Endothelial cell of umbilical vein (primary cell): ENCODE measurements at regions of chr11 and their contacts with region 1.

Region 1: GRCh38 chr11:27158722-27159679 is 118.4 kb downstream of the BBOX1 start:
- DNase-seq: peak; percentile 70
- H3K4me3 ChIP-seq: no peak overlapping the region
- H3K27ac ChIP-seq: no peak overlapping the region
- H3K4me1 ChIP-seq: no peaks in the 10 kb centered on the region
- H3K27me3 ChIP-seq: no peaks in the 10 kb centered on the region
- CTCF ChIP-seq: peak; percentile 54 to 70
- POLR2A ChIP-seq: no peak

Region 2: DNA sequence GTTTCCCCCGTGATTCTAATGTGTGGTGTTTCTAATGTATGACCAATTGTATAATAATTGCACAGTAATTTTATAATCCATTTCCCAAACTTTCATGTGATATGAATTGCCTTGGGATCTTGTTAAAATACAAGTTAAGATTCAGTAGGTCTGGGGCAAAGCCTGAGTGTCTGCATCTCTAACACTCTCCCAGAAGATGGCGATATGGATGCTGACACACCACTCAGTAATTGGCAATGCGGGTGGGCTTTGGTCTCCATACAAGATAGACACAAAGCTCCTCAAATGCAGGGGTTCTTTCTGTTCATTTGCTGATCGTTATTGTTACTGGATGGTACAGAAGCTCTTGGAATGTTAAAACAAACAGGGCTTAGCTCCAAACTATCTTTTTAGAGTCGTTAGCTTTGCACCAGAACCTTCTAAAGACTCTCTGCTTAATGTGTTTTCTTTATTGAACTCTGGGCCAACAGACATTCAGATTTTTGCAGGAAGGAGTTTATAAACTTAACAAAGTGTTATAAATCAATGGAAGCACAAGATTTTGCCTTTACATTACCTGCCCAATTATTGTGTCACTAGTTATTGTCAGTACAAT is 872.4 kb before region 1 on chr11:
- CTCF ChIA-PET with region 1: interaction called, 50 read pairs
- POLR2A ChIA-PET with region 1: no interaction called
- dilution Hi-C with region 1: no loop called
- intact Hi-C with region 1: loop called (anchors 1 kb)
- DNase-seq: peak; percentile 37
- H3K4me3 ChIP-seq: no peak overlapping the region
- H3K27ac ChIP-seq: no peak overlapping the region
- H3K4me1 ChIP-seq: peaks cover 7% of the 10 kb centered on the region
- H3K27me3 ChIP-seq: no peaks in the 10 kb centered on the region
- CTCF ChIP-seq: peak; percentile 21 to 59
- POLR2A ChIP-seq: no peak

Region 3: GRCh38 chr11:26297189-26297975 is 861.6 kb before region 1 on chr11:
- CTCF ChIA-PET with region 1: interaction called, 36 read pairs
- POLR2A ChIA-PET with region 1: no interaction called
- dilution Hi-C with region 1: no loop called
- intact Hi-C with region 1: loop called (anchors 1 kb)
- DNase-seq: peak; percentile 52
- H3K4me3 ChIP-seq: no peak overlapping the region
- H3K27ac ChIP-seq: no peak overlapping the region
- H3K4me1 ChIP-seq: no peaks in the 10 kb centered on the region
- H3K27me3 ChIP-seq: peaks cover 2 to 5% of the 10 kb centered on the region in 2 experiments
- CTCF ChIP-seq: peak; percentile 49 to 57
- POLR2A ChIP-seq: no peak

Region 4: DNA sequence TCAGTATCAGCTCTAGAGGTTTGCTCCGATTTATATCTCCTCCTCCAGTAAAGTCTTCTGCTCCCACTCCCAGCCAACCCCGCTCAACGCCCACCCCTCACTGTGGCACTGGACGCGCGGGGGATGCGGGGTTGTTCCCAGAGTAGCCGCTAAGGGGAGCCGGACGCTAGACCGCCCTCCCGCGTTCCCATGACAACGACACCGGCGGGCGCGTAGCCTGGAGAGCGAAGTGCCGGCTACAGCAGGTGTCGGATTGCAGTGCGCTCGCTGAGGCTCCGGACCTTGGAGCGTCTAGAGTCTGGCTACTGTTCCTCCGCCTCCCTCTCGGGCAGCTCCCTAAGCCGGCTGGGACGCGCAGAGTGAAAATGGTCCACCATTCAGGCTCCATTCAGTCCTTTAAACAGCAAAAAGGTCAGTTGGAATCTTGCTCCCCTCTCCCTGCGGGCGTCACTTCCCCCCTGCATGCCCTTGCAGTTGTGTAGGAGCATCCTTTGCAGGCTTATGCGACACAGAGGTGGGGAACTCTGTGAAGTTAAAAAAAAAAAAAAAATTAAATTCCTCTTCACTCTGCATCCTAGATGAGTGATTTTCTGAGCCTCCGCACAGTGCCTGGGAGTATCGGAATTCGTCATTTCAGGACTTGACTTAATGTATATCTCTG is 827.0 kb before region 1 on chr11 and contains the start of gene ANO3:
- CTCF ChIA-PET with region 1: no interaction called
- POLR2A ChIA-PET with region 1: no interaction called
- dilution Hi-C with region 1: no loop called
- intact Hi-C with region 1: loop called (anchors 1 kb)
- DNase-seq: peak; percentile 65
- H3K4me3 ChIP-seq: no peak within 1 kb of the TSS
- H3K27ac ChIP-seq: no peak within 1 kb of the TSS
- H3K4me1 ChIP-seq: no peaks in the 10 kb centered on the region
- H3K27me3 ChIP-seq: peaks cover 6 to 16% of the 10 kb centered on the region in 2 experiments
- CTCF ChIP-seq: peak; percentile 43 to 79
- POLR2A ChIP-seq: no peak
- total RNA-seq, gene ANO3: not detected in 2 replicates

Region 5: DNA sequence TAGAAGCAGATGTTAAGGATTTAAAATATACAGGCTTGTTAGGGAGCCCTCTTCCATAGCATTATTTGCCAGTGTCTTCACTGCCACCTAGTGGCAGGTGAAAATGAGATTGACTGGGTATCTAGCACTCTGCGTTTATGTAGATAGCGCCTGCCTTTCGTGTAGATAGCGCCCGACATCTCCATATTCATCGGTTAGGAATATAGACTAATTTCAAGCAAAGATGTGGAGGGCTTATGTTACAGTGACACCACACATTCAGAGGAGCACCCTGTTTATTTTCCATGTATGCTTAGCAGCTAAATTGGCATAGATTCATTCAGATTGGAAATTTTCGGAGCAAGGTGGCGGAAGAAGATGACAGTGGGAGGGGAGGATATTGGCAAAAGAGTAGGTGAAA is 509.1 kb before region 1 on chr11:
- CTCF ChIA-PET with region 1: no interaction called
- POLR2A ChIA-PET with region 1: no interaction called
- dilution Hi-C with region 1: no loop called
- intact Hi-C with region 1: loop called (anchors 10 kb)
- DNase-seq: peak; percentile 63
- H3K4me3 ChIP-seq: no peak overlapping the region
- H3K27ac ChIP-seq: no peak overlapping the region
- H3K4me1 ChIP-seq: no peaks in the 10 kb centered on the region
- H3K27me3 ChIP-seq: no peaks in the 10 kb centered on the region
- CTCF ChIP-seq: peak; percentile 49 to 61
- POLR2A ChIP-seq: no peak

Region 6: GRCh38 chr11:26753723-26754504 is 405.1 kb before region 1 on chr11:
- CTCF ChIA-PET with region 1: interaction called, 33 read pairs
- POLR2A ChIA-PET with region 1: no interaction called
- dilution Hi-C with region 1: no loop called
- intact Hi-C with region 1: loop called (anchors 1 kb)
- DNase-seq: peak; percentile 35
- H3K4me3 ChIP-seq: no peak overlapping the region
- H3K27ac ChIP-seq: no peak overlapping the region
- H3K4me1 ChIP-seq: no peaks in the 10 kb centered on the region
- H3K27me3 ChIP-seq: no peaks in the 10 kb centered on the region
- CTCF ChIP-seq: peak; percentile 30 to 44
- POLR2A ChIP-seq: no peak

Region 7: GRCh38 chr11:27353593-27354358 is 194.8 kb after region 1 on chr11:
- CTCF ChIA-PET with region 1: no interaction called
- POLR2A ChIA-PET with region 1: no interaction called
- dilution Hi-C with region 1: no loop called
- intact Hi-C with region 1: no loop called
- DNase-seq: no peak
- H3K4me3 ChIP-seq: no peak overlapping the region
- H3K27ac ChIP-seq: no peak overlapping the region
- H3K4me1 ChIP-seq: no peaks in the 10 kb centered on the region
- H3K27me3 ChIP-seq: no peaks in the 10 kb centered on the region
- CTCF ChIP-seq: no peak
- POLR2A ChIP-seq: no peak